ENCODE measurements at regions of chr10 and their contacts with region 1.

Region 1: DNA sequence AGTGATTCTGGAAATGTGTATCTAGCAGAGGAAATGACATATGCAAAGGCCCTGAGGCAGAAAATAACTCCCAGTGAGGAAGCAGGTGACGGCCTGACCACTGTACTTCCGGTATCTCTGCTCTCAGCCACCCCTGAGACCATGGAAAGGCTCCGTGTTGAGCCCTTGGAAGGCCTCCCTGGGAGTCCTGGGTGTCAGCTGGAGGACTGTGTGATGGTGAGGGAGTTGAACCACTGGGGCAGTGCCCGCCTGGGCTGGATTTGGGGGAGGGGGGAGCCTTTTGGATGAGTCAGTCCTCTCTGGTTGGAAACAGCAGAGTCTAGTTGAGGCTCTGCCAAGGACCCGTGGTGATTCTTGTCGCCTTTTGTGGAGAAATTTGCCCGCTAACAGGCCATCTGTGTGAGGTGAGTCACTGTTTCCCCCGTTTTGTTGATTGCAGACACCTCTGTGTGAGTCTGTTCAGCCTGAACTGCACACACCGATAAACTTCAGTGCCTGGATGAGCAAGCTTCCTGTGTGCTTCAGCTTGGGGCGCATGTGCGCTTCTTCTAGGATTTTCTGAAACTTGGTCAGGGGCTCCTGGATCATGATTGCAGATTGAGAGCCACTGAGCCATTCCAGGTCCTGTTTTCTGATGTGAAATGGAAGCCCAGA is 98.6 kb downstream of the GRK5 start:
- DNase-seq: peak; percentile 95
- H3K4me3 ChIP-seq: no peak overlapping the region
- H3K27ac ChIP-seq: peak overlapping the region; percentile 73 to 92 (median 79)
- H3K4me1 ChIP-seq: peaks cover 0 to 91% (median 71%) of the 10 kb centered on the region in 4 donors
- H3K27me3 ChIP-seq: no peaks in the 10 kb centered on the region
- CTCF ChIP-seq: no peak
- EP300 ChIP-seq: peak in 1 of 4 donors; percentile 81
- POLR2A ChIP-seq: no peak

Region 2: GRCh38 chr10:119103903-119104652 is 201.9 kb before region 1 on chr10 and contains the start of gene DENND10:
- intact Hi-C with region 1: no loop called
- DNase-seq: peak; percentile 94
- H3K4me3 ChIP-seq: peak within 1 kb of the TSS; percentile 58 to 95 (median 90)
- H3K27ac ChIP-seq: peak within 1 kb of the TSS; percentile 76 to 94 (median 88)
- H3K4me1 ChIP-seq: peaks cover 0 to 18% (median 14%) of the 10 kb centered on the region in 4 donors
- H3K27me3 ChIP-seq: no peaks in the 10 kb centered on the region
- CTCF ChIP-seq: no peak
- EP300 ChIP-seq: no peak
- POLR2A ChIP-seq: peak; percentile 68 to 81
- total RNA-seq, gene DENND10: 35.0 to 51.3 (median 39.3) TPM

Region 3: GRCh38 chr10:119253433-119254174 is 52.4 kb before region 1 on chr10:
- intact Hi-C with region 1: loop called (anchors 5 kb)
- DNase-seq: peak; percentile 92
- H3K4me3 ChIP-seq: no peak overlapping the region
- H3K27ac ChIP-seq: peak overlapping the region; percentile 83 to 94 (median 87)
- H3K4me1 ChIP-seq: peaks cover 0 to 81% (median 71%) of the 10 kb centered on the region in 4 donors
- H3K27me3 ChIP-seq: no peaks in the 10 kb centered on the region
- CTCF ChIP-seq: no peak
- EP300 ChIP-seq: peak in 3 of 4 donors; percentile 26 to 51 (median 28)
- POLR2A ChIP-seq: no peak